ENCODE measurements at regions of chr6 and their contacts with region 1.

Region 1: GRCh38 chr6:144013486-144013909 is 5.4 kb upstream of the PLAGL1 start:
- DNase-seq: peak; percentile 68
- ATAC-seq: no peak
- H3K4me3 ChIP-seq: no peak overlapping the region
- H3K4me3 Mint-ChIP-seq: no peak overlapping the region
- H3K27ac ChIP-seq: no peak overlapping the region
- H3K27ac Mint-ChIP-seq: no peak overlapping the region
- H3K4me1 ChIP-seq: no peaks in the 10 kb centered on the region
- H3K4me1 Mint-ChIP-seq: peaks cover 5% of the 10 kb centered on the region
- H3K27me3 ChIP-seq: peaks cover 0 to 2% (median 0%) of the 10 kb centered on the region in 4 experiments
- H3K27me3 Mint-ChIP-seq: no peaks in the 10 kb centered on the region
- CTCF ChIP-seq: peak; percentile 98

Region 2: GRCh38 chr6:142474531-142475289 is 1538.8 kb before region 1 on chr6:
- CTCF ChIA-PET with region 1: interaction called, 15 read pairs
- POLR2A ChIA-PET with region 1: no interaction called
- intact Hi-C with region 1: loop called (anchors 2 kb)
- DNase-seq: peak; percentile 48
- ATAC-seq: no peak
- H3K4me3 ChIP-seq: no peak overlapping the region
- H3K4me3 Mint-ChIP-seq: no peak overlapping the region
- H3K27ac ChIP-seq: no peak overlapping the region
- H3K27ac Mint-ChIP-seq: no peak overlapping the region
- H3K4me1 ChIP-seq: no peaks in the 10 kb centered on the region
- H3K4me1 Mint-ChIP-seq: no peaks in the 10 kb centered on the region
- H3K27me3 ChIP-seq: peaks cover 0 to 3% (median 0%) of the 10 kb centered on the region in 4 experiments
- H3K27me3 Mint-ChIP-seq: peaks cover 7% of the 10 kb centered on the region
- CTCF ChIP-seq: peak; percentile 96

Region 3: DNA sequence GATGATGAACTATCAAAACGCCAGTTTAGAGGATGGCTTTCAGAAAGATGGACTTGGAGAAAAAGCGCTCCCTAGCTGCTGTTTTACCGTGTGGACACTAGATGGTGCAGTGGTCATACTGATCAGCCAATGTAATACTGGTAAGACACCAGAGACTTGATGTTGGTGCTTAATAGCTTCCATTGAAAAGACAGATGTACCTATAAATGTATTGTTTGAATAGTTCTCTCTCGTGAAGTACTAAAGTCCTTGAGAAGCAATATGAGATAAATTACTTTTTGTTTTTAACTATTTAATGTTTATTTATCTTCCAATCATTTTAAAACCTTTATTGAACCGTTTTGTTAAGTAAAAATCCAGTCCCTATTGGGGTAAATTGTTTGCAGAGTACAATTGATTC is 438.1 kb before region 1 on chr6:
- CTCF ChIA-PET with region 1: interaction called, 95 read pairs
- POLR2A ChIA-PET with region 1: no interaction called
- intact Hi-C with region 1: loop called (anchors 1 kb)
- DNase-seq: peak; percentile 76
- ATAC-seq: peak; percentile 98
- H3K4me3 ChIP-seq: no peak overlapping the region
- H3K4me3 Mint-ChIP-seq: no peak overlapping the region
- H3K27ac ChIP-seq: no peak overlapping the region
- H3K27ac Mint-ChIP-seq: no peak overlapping the region
- H3K4me1 ChIP-seq: no peaks in the 10 kb centered on the region
- H3K4me1 Mint-ChIP-seq: no peaks in the 10 kb centered on the region
- H3K27me3 ChIP-seq: no peaks in the 10 kb centered on the region
- H3K27me3 Mint-ChIP-seq: no peaks in the 10 kb centered on the region
- CTCF ChIP-seq: peak; percentile 95

Region 4: DNA sequence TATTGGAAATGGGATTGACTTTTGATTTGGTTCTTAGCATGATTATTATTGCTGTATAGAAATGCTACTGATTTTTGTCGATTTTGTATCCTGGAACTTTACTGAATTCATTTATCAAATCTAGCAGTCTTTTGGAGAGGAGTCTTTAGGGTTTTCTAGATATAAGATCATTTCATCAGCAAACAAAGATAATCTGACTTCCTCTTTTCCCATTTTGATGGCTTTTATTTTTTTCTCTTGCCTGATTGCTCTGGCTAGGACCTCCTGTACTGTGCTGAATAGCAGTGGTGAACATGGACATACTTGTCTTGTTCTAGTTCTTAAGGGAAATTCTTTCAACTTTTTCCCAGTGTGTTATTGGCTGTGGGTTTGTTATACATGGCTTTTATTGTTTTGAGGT is 84.6 kb before region 1 on chr6:
- CTCF ChIA-PET with region 1: no interaction called
- POLR2A ChIA-PET with region 1: no interaction called
- intact Hi-C with region 1: no loop called
- DNase-seq: no peak
- ATAC-seq: no peak
- H3K4me3 ChIP-seq: no peak overlapping the region
- H3K4me3 Mint-ChIP-seq: no peak overlapping the region
- H3K27ac ChIP-seq: no peak overlapping the region
- H3K27ac Mint-ChIP-seq: no peak overlapping the region
- H3K4me1 ChIP-seq: no peaks in the 10 kb centered on the region
- H3K4me1 Mint-ChIP-seq: no peaks in the 10 kb centered on the region
- H3K27me3 ChIP-seq: no peaks in the 10 kb centered on the region
- H3K27me3 Mint-ChIP-seq: no peaks in the 10 kb centered on the region
- CTCF ChIP-seq: no peak

Region 5: DNA sequence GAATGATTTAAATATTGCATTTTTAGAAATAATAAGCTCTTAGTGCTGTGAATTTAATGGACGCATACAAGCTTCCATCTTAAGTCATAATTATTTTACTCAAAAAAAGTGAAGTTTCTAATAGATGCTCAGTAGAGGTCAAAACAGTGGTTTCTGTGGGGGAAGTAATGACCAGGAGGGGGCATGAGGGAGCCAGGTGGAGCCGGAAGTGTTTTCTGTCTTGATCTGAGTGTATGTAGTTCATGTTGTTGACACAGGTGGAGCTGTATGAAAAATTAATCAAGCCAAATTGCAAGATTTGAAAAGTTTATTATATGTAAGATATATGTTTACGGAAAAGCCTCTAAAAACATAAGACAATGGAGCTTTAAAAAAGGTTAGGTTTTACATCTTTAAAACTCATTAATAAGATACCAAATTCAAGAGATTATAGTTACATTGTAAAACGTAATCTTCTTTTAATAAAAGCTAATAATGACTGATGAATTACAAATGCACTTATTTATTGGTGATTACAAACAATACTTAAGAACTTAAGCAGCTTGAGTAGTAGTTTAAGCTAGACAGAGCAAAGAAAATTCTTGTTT is 73.4 kb before region 1 on chr6:
- CTCF ChIA-PET with region 1: interaction called, 108 read pairs
- POLR2A ChIA-PET with region 1: no interaction called
- intact Hi-C with region 1: loop called (anchors 1 kb)
- DNase-seq: peak; percentile 74
- ATAC-seq: peak; percentile 98
- H3K4me3 ChIP-seq: no peak overlapping the region
- H3K4me3 Mint-ChIP-seq: no peak overlapping the region
- H3K27ac ChIP-seq: no peak overlapping the region
- H3K27ac Mint-ChIP-seq: no peak overlapping the region
- H3K4me1 ChIP-seq: no peaks in the 10 kb centered on the region
- H3K4me1 Mint-ChIP-seq: peaks cover 3% of the 10 kb centered on the region
- H3K27me3 ChIP-seq: no peaks in the 10 kb centered on the region
- H3K27me3 Mint-ChIP-seq: no peaks in the 10 kb centered on the region
- CTCF ChIP-seq: peak; percentile 92

Region 6: GRCh38 chr6:143999406-143999805 is 14.1 kb before region 1 on chr6:
- CTCF ChIA-PET with region 1: interaction called, 10 read pairs
- POLR2A ChIA-PET with region 1: no interaction called
- intact Hi-C with region 1: no loop called
- DNase-seq: no peak
- ATAC-seq: no peak
- H3K4me3 ChIP-seq: no peak overlapping the region
- H3K4me3 Mint-ChIP-seq: no peak overlapping the region
- H3K27ac ChIP-seq: no peak overlapping the region
- H3K27ac Mint-ChIP-seq: no peak overlapping the region
- H3K4me1 ChIP-seq: no peaks in the 10 kb centered on the region
- H3K4me1 Mint-ChIP-seq: no peaks in the 10 kb centered on the region
- H3K27me3 ChIP-seq: no peaks in the 10 kb centered on the region
- H3K27me3 Mint-ChIP-seq: no peaks in the 10 kb centered on the region
- CTCF ChIP-seq: no peak

Region 7: GRCh38 chr6:144055121-144055931 is 41.8 kb after region 1 on chr6:
- CTCF ChIA-PET with region 1: interaction called, 19 read pairs
- POLR2A ChIA-PET with region 1: no interaction called
- intact Hi-C with region 1: no loop called
- DNase-seq: peak; percentile 58
- ATAC-seq: peak; percentile 91
- H3K4me3 ChIP-seq: peak overlapping the region; percentile 11 to 46 (median 41)
- H3K4me3 Mint-ChIP-seq: peak overlapping the region; percentile 85
- H3K27ac ChIP-seq: peak overlapping the region; percentile 48 to 86
- H3K27ac Mint-ChIP-seq: peak overlapping the region; percentile 90
- H3K4me1 ChIP-seq: peaks cover 10 to 17% of the 10 kb centered on the region in 2 donors
- H3K4me1 Mint-ChIP-seq: peaks cover 32% of the 10 kb centered on the region
- H3K27me3 ChIP-seq: no peaks in the 10 kb centered on the region
- H3K27me3 Mint-ChIP-seq: no peaks in the 10 kb centered on the region
- CTCF ChIP-seq: no peak

Region 8: DNA sequence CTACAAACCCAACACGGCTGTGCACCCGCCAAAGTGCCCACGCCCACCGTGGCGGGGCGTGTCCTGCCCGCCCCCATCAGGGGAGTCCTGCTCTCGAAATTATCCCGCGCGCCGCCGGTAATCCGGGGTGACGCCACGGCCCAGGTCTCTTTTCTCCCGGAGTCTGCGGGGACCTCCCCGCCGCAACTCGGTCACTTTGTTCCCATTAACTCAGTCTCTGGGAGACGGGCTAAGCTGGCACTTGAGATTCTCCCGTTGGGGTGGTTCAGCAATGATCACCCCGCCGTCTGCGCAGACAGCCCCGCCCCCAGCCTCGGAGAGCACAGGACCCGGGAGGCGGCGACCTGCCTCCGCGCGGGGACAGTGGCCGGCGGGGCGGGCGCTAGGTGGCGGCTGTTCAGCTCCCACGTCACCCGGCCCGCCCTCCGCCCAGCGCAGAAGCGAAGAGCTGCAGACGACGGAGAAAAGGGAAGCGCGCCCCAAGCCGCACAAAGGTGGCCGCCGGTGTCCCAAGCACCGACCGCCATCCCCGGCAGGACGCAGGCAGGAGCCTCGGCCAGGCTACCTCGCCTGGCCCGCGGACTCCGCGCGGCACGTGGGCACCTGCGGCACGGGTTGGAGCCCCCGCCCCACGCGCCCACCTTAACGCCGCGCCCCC is 50.4 kb after region 1 on chr6:
- CTCF ChIA-PET with region 1: interaction called, 11 read pairs
- POLR2A ChIA-PET with region 1: interaction called, 4 read pairs
- intact Hi-C with region 1: no loop called
- DNase-seq: peak; percentile 97
- ATAC-seq: peak; percentile 91
- H3K4me3 ChIP-seq: peak overlapping the region; percentile 74 to 86 (median 82)
- H3K4me3 Mint-ChIP-seq: peak overlapping the region; percentile 90
- H3K27ac ChIP-seq: peak overlapping the region; percentile 88 to 96
- H3K27ac Mint-ChIP-seq: peak overlapping the region; percentile 92
- H3K4me1 ChIP-seq: peaks cover 21 to 32% of the 10 kb centered on the region in 2 donors
- H3K4me1 Mint-ChIP-seq: peaks cover 37% of the 10 kb centered on the region
- H3K27me3 ChIP-seq: no peaks in the 10 kb centered on the region
- H3K27me3 Mint-ChIP-seq: no peaks in the 10 kb centered on the region
- CTCF ChIP-seq: peak; percentile 14

Measured in B cell (primary cell).